A549 (cell line): ENCODE measurements at regions of chr12 and their contacts with region 1.

Region 1: DNA sequence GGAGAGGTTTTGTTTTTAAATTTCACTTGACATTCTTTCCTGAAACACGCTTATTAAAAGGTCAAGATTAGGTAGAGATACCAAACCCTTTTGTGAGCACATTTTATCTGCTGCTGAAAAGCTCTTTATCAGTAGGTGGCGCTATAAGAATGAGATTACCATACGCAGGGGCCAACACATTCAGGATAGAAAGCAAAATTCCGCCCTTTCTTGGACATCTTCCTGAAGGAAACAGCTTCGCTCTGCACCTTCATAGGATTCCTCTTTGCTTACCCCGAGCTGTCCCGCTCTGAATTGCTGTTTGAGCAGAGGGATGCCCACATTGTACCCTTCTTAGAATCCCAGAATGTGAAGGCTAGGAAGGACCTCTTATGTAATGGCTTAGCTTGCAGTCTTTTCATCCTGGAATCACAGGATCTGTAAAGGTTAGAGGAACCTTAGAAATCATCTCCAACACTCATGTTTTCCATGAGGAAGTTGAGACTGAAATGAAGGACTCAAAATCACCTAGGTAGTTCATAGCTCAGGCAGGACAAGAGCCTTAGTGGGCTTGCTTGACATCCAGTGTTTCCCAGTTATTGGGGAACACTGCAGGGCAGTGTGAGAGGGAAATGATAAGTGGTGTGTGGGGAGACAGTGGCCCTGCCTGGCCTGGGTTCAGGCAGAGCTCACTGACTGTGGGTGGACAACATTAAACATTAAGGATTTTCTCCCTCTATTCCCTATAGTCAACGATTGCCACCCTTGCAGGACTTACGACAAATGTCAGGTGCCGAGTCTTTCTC is 38.7 kb upstream of the CRY1 start:
- DNase-seq: peak; percentile 72 to 76
- ATAC-seq: peak; percentile 75 to 91
- H3K4me3 ChIP-seq: no peak overlapping the region
- H3K27ac ChIP-seq: peak overlapping the region; percentile 55 to 62; a peak in 5 of 6 replicates
- H3K4me1 ChIP-seq: 0 out of 3 replicates have a peak, but pooled peaks cover 4% of the 10 kb centered on the region
- CTCF ChIP-seq: peak; percentile 97
- EP300 ChIP-seq: no peak
- POLR2A ChIP-seq: no peak
- RAD21 ChIP-seq: peak; percentile 97 to 99

Region 2: GRCh38 chr12:107115119-107115518 is 16.9 kb before region 1 on chr12:
- CTCF ChIA-PET with region 1: interaction called, 33 read pairs
- POLR2A ChIA-PET with region 1: no interaction called
- DNase-seq: no peak
- ATAC-seq: no peak
- H3K4me3 ChIP-seq: no peak overlapping the region
- H3K27ac ChIP-seq: no peak overlapping the region
- H3K4me1 ChIP-seq: no peaks in the 10 kb centered on the region
- CTCF ChIP-seq: no peak
- EP300 ChIP-seq: no peak
- POLR2A ChIP-seq: no peak
- RAD21 ChIP-seq: no peak

Region 3: DNA sequence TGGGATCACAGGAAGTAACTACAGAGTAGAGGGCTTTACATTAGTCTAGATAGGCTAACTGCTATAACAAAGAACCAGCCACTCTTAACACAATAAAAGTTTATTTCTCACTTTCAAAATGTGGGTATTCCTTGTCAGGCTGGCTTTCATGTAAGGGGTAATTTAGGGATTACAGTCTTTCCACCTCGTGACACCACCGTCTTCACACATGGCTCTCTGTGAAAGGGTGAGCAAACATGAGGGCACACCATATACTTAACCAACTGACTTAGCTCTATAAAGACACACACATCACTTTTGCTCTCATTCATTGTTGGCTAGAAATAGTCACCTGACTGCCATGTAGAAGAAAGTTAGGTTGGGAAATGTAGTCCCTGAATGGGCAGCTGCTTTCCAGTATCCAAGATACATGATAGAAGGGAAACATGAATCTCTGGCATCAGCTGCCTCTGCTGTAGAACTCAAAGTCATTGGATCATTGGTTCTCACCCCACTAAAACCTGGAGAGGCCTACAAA is 27.4 kb after region 1 on chr12:
- CTCF ChIA-PET with region 1: interaction called, 44 read pairs
- POLR2A ChIA-PET with region 1: no interaction called
- DNase-seq: no peak
- ATAC-seq: no peak
- H3K4me3 ChIP-seq: no peak overlapping the region
- H3K27ac ChIP-seq: no peak overlapping the region
- H3K4me1 ChIP-seq: no peaks in the 10 kb centered on the region
- CTCF ChIP-seq: no peak
- EP300 ChIP-seq: no peak
- POLR2A ChIP-seq: no peak
- RAD21 ChIP-seq: no peak

Region 4: DNA sequence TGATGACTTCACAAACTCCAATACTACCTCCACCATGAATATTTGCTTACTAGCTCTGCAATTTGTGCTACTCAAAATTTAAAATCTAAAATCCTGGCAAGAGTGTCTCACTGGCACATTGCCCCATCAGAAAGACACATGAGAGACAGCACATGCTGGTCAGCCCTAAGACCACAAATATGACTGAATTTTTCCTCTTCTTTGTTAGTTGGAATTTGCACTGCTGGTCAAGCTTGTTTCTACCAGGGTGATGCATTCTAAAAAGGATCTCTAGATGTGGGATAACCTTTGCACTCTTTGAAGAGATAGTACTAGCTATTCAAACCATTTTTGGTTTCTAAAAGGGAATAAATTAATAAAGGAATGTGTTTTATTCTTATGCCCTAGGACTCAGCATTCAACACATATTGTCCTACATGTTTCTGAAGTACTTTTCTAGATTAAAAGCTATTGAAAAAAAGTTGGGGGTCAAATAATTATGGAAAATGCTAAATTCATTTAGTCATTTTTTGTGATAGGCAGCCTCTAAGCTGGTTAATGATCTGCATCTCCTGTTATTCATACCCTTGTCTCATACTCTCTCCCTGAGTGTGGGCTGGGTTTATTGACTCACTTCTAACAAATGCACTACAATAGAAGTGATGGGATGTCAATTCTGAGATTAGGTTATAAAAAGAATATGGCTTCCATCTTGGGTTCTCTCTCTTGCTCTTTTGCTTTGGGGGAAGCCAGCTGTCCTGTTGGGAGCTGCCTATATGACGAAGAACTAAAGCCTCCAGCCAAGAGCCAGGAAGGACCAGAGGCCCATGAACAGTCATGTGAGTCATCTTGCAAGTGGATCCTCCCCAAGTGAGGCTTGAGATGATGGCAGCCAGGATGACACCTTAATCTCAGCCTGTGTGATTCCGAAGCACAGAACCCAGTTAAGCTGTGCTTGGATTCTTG is 172.8 kb after region 1 on chr12:
- CTCF ChIA-PET with region 1: interaction called, 21 read pairs
- POLR2A ChIA-PET with region 1: no interaction called
- DNase-seq: peak in 1 of 2 experiments; percentile 25
- ATAC-seq: no peak
- H3K4me3 ChIP-seq: no peak overlapping the region
- H3K27ac ChIP-seq: no peak overlapping the region
- H3K4me1 ChIP-seq: no peaks in the 10 kb centered on the region
- CTCF ChIP-seq: no peak
- EP300 ChIP-seq: no peak
- POLR2A ChIP-seq: no peak
- RAD21 ChIP-seq: no peak

Region 5: GRCh38 chr12:107395817-107396216 is 263.8 kb after region 1 on chr12:
- CTCF ChIA-PET with region 1: interaction called, 217 read pairs
- POLR2A ChIA-PET with region 1: no interaction called
- DNase-seq: peak in 1 of 2 experiments; percentile 55
- ATAC-seq: peak; percentile 44 to 59; a peak in 5 of 6 replicates
- H3K4me3 ChIP-seq: no peak overlapping the region
- H3K27ac ChIP-seq: peak overlapping the region; percentile 85 to 88
- H3K4me1 ChIP-seq: peaks cover 72% of the 10 kb centered on the region
- CTCF ChIP-seq: no peak
- EP300 ChIP-seq: no peak
- POLR2A ChIP-seq: no peak
- RAD21 ChIP-seq: no peak

Region 6: DNA sequence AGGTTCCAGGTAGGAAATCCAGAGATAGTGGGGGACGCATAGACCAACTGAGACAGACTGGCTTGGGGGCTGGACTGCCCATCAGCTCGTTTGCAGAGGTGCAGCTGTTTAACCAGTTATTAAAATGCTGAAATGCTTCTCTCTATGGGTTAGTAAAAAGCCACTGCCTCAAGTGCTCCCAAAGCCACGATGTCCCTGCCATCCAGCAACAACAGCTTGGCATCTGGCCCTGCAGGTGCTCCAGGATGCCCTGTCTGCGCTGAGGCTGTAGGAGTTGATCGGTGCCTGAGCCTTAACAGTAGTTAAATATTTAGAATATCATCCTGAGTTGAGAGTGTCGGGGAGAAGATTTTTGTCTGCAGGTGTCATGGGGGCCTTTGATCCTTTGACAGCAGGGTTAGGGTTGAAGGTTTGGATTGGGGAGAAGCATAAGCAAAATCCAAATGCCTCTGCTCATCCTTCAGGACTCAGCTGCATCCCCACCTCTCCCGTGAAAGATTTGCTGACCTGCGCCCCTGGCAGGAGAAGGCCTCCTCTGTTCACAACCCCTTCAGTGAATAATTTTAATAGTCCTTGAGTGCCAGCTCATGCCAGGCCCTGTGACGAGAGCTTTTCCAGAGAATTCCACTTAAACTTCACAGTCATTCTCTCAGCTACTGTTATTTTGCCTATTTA is 426.3 kb after region 1 on chr12:
- CTCF ChIA-PET with region 1: interaction called, 13 read pairs
- POLR2A ChIA-PET with region 1: no interaction called
- DNase-seq: no peak
- ATAC-seq: no peak
- H3K4me3 ChIP-seq: no peak overlapping the region
- H3K27ac ChIP-seq: no peak overlapping the region
- H3K4me1 ChIP-seq: no peaks in the 10 kb centered on the region
- CTCF ChIP-seq: no peak
- EP300 ChIP-seq: no peak
- POLR2A ChIP-seq: no peak
- RAD21 ChIP-seq: no peak

Region 7: DNA sequence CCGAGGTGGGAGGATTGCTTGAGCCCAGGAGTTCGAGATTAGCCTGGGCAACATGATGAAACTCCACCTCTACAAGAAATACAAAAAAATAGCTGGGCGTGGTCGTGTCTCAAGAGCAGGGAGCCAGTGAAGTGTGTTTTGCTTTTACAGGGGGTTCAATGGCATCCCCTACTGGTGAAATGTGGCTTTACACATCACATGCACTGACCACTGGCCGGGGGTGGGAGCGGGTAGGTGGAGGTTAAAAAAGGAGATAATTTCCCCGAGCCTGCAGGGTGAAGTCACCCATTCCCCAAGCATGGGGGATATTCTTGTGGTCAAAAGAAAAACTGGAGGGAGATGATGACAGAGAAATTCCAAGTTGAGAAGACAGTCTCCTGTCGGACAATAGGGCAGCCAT is 490.0 kb after region 1 on chr12:
- CTCF ChIA-PET with region 1: interaction called, 53 read pairs
- POLR2A ChIA-PET with region 1: no interaction called
- DNase-seq: peak in 1 of 2 experiments; percentile 47
- ATAC-seq: peak in 1 of 2 experiments; percentile 49; a peak in 1 of 6 replicates
- H3K4me3 ChIP-seq: no peak overlapping the region
- H3K27ac ChIP-seq: no peak overlapping the region
- H3K4me1 ChIP-seq: no peaks in the 10 kb centered on the region
- CTCF ChIP-seq: peak; percentile 48
- EP300 ChIP-seq: no peak
- POLR2A ChIP-seq: no peak
- RAD21 ChIP-seq: peak; percentile 38 to 43; a peak in 4 of 5 replicates